Activated CD4-positive, alpha-beta memory T cell treated with anti-CD3 and anti-CD28 coated beads for 36 hours (primary cell): ENCODE measurements at regions of chr21 and their contacts with region 1.

Region 1: DNA sequence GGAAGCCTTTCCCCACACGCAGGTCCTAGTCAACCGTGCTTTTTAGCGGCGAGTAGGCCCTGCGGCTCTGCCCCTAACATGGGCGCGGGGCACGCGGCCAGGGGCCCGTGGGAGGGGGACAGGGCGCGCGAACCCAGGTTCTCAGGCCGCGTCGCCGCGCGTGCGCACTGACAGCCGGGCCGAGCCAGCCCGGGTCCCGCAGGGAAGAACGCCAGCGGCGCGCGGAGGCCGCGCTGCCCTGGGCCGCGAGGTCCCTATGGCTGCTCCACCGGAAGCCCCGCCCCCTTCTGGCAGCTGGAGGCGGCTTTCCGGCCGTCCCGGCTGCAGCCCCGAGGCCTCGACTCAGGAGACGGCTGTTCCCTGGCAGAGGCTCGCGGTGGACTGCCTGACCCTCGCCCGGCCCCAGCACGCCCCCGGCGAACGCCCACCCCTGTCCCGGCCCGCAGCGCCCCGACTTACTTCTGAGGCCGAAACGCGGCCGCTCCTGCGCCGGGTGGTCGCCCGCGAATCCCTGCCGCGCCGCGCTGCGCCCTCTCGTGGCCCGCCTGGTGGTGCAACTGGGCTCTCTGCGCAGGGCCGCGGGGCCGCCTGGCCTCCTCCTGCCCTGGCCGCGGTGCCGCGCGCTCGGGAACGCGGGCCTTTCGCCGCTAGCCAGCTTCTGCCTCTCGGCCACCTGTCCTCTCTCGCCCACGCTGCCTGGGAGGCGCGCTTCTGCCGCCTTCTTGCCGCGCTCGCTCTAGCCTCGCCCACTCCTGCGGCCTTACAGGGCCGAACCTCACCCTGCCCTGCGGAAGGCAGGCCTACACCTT is 16.6 kb upstream of the RIPPLY3 start:
- DNase-seq: peak; percentile 92
- H3K4me3 Mint-ChIP-seq: peak overlapping the region; percentile 72
- H3K27ac Mint-ChIP-seq: peak overlapping the region; percentile 78
- H3K4me1 Mint-ChIP-seq: peaks cover 39% of the 10 kb centered on the region
- H3K27me3 Mint-ChIP-seq: no peaks in the 10 kb centered on the region

Region 2: DNA sequence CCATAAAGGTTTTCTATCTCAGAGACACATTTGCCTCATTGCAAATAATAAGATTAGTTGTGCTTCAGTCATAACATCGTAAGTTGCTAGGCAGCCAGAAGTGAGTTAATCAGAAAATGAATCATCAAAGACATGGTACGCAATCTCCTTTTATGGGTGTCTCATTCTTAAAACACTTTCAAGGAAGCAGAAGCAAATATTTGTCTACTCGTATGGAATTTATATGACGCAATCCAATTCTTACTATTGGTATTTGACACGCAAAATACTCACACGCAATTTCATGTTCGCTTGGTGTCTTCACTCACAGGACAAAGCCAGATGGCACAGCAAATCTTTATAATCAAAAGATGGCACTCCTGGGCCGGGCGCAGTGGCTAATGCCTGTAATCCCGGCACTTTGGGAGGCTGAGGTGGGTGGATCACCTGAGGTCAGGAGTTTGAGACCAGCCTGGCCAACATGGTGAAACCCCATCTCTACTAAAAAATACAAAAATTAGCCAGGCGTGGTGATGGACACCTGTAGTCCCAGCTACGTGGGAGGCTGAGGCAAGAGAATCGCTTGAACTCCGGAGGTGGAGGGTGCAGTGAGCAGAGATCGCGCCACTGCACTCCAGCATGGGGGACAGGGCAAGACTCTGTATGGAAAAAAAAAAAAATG is 79.9 kb before region 1 on chr21:
- CTCF ChIA-PET with region 1: no interaction called
- POLR2A ChIA-PET with region 1: no interaction called
- intact Hi-C with region 1: loop called (anchors 5 kb)
- DNase-seq: peak; percentile 55
- H3K4me3 Mint-ChIP-seq: no peak overlapping the region
- H3K27ac Mint-ChIP-seq: peak overlapping the region; percentile 95
- H3K4me1 Mint-ChIP-seq: peaks cover 57% of the 10 kb centered on the region
- H3K27me3 Mint-ChIP-seq: no peaks in the 10 kb centered on the region

Region 3: DNA sequence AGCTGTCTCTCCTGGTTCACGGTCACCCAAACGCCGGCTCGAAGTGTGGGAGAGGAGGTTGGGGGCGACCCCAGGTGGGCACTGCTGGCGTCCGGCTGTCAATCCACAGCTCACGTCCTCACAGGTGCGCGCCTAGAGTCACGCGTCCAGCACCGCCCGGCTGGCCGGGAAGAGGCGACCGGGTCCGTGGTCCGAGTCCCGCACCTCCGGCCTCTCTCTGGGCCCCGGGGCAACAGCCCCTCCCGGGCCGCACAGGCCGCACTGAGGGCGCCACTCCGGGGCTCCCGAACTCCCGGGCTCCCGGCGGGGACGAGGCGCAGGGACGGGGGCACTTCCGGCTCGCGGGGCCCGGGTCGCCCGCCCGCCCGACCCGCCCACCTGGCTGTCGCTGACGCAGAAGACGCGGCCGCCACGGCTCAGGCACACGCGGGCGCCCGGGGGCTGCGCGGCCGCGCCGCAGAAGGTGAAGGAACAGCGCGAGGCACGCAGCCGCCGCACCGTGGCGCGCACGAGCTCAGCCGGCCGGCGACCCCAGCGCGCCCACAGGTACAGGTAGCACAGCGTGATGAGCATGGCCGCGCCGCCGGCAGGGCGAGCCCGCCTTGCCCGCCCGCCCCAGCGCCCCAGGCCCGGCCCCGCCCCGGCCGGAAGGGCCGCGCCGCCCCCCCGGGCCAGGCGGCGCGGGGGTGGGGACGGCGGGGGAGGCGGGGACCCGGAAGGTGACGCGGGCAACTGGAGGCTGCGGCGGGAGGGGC is 23.7 kb before region 1 on chr21 and contains the start of gene HLCS:
- CTCF ChIA-PET with region 1: interaction called, 51 read pairs
- POLR2A ChIA-PET with region 1: interaction called, 6 read pairs
- intact Hi-C with region 1: loop called (anchors 2 kb)
- DNase-seq: peak; percentile 82
- H3K4me3 Mint-ChIP-seq: peak within 1 kb of the TSS; percentile 84
- H3K27ac Mint-ChIP-seq: peak within 1 kb of the TSS; percentile 82
- H3K4me1 Mint-ChIP-seq: peaks cover 12% of the 10 kb centered on the region
- H3K27me3 Mint-ChIP-seq: no peaks in the 10 kb centered on the region
- total RNA-seq, gene HLCS: 12.7 to 17.5 TPM

Region 4: GRCh38 chr21:37000381-37000780 is 10.5 kb after region 1 on chr21:
- CTCF ChIA-PET with region 1: interaction called, 11 read pairs
- POLR2A ChIA-PET with region 1: no interaction called
- intact Hi-C with region 1: no loop called
- DNase-seq: no peak
- H3K4me3 Mint-ChIP-seq: no peak overlapping the region
- H3K27ac Mint-ChIP-seq: no peak overlapping the region
- H3K4me1 Mint-ChIP-seq: peaks cover 7% of the 10 kb centered on the region
- H3K27me3 Mint-ChIP-seq: peaks cover 2% of the 10 kb centered on the region

Region 5: GRCh38 chr21:37017951-37018679 is 28.2 kb after region 1 on chr21:
- CTCF ChIA-PET with region 1: no interaction called
- POLR2A ChIA-PET with region 1: no interaction called
- intact Hi-C with region 1: no loop called
- DNase-seq: no peak
- H3K4me3 Mint-ChIP-seq: no peak overlapping the region
- H3K27ac Mint-ChIP-seq: no peak overlapping the region
- H3K4me1 Mint-ChIP-seq: no peaks in the 10 kb centered on the region
- H3K27me3 Mint-ChIP-seq: peaks cover 6% of the 10 kb centered on the region

Region 6: DNA sequence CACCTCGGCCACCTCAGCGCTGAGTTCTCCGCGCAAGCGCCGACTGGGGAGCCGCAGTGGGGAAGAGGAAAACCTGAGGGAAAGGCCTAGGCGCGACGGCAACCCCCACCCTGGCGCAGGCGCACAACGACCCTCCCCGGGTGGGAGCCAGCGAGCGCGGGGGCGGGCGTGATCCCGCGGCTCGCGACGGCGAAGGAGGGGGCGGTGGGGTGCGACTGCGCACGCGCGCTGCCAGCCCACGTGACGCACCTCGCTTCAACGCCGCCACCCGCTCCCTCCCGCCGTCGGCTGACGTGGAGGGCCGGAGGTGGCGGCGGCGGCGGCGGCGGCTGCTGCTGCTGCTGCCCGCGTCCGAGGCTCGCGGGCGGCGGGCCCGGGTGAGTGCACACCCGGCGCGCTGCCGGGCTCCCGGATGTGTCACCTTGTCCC is 83.1 kb after region 1 on chr21 and contains the starts of genes PIGP and TTC3:
- CTCF ChIA-PET with region 1: interaction called, 4 read pairs
- POLR2A ChIA-PET with region 1: interaction called, 3 read pairs
- intact Hi-C with region 1: loop called (anchors 2 kb)
- DNase-seq: peak; percentile 97
- H3K4me3 Mint-ChIP-seq: peak within 1 kb of the TSS; percentile 99
- H3K27ac Mint-ChIP-seq: peak within 1 kb of the TSS; percentile 89
- H3K4me1 Mint-ChIP-seq: peaks cover 50% of the 10 kb centered on the region
- H3K27me3 Mint-ChIP-seq: no peaks in the 10 kb centered on the region
- total RNA-seq, gene PIGP: 19.2 to 21.2 TPM
- total RNA-seq, gene TTC3: 63.1 to 65.6 TPM